ENCODE measurements at regions of chr3 and their contacts with region 1.

Region 1: DNA sequence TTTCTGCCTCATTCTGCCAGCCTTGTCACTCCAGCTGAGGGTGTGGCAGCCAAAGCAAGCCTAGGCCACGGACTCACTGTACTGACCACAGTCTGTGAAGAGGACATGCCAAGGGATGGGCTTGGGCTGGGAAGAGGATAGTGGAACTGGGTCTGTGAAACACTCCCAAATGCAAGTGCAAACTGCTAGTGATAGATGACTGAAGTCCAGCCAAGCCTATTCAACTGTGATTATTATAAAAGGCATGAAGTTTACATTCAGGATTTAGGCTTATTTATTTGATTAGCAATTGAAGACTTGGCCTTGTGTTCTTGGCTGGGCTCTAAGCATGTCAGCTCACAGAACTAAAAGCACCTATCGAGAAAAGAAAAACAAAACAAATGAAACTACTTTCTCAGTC is 84.9 kb upstream of the UBE2E1 start:
- DNase-seq: no peak
- ATAC-seq: no peak
- H3K4me3 ChIP-seq: no peak overlapping the region
- H3K27ac ChIP-seq: no peak overlapping the region
- H3K4me1 ChIP-seq: no peaks in the 10 kb centered on the region
- H3K27me3 ChIP-seq: no peaks in the 10 kb centered on the region
- CTCF ChIP-seq: no peak

Region 2: GRCh38 chr3:22208844-22209243 is 1512.0 kb before region 1 on chr3:
- CTCF ChIA-PET with region 1: no interaction called
- POLR2A ChIA-PET with region 1: interaction called, 13 read pairs
- intact Hi-C with region 1: no loop called
- DNase-seq: no peak
- ATAC-seq: peak; percentile 57
- H3K4me3 ChIP-seq: no peak overlapping the region
- H3K27ac ChIP-seq: no peak overlapping the region
- H3K4me1 ChIP-seq: no peaks in the 10 kb centered on the region
- H3K27me3 ChIP-seq: no peaks in the 10 kb centered on the region
- CTCF ChIP-seq: no peak

Region 3: DNA sequence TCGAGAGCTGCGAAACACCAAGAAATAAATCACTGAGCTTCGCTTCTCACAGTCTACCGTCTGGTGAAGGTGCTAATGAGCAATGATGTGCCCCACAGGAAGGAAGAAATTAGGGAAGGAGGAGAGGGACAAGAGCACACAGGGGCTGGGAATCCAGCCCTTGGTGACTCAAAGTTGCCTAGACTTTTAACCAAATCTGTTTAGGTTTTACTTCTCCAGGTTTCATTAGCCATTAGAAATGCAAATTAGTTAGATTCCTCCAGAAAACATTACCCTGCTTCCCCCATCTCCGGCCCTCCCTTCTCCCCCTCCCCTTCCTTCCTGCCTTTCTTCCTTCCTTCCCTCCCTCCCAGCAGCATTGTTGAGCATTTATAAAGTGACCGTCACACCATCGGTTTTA is 25.6 kb after region 1 on chr3:
- CTCF ChIA-PET with region 1: interaction called, 10 read pairs
- POLR2A ChIA-PET with region 1: no interaction called
- intact Hi-C with region 1: no loop called
- DNase-seq: no peak
- ATAC-seq: no peak
- H3K4me3 ChIP-seq: no peak overlapping the region
- H3K27ac ChIP-seq: no peak overlapping the region
- H3K4me1 ChIP-seq: peaks cover 55% of the 10 kb centered on the region
- H3K27me3 ChIP-seq: no peaks in the 10 kb centered on the region
- CTCF ChIP-seq: no peak

Measured in PC-3 (cell line).